Endothelial cell of umbilical vein (primary cell): ENCODE measurements at regions of chr10 and their contacts with region 1.

Region 1: DNA sequence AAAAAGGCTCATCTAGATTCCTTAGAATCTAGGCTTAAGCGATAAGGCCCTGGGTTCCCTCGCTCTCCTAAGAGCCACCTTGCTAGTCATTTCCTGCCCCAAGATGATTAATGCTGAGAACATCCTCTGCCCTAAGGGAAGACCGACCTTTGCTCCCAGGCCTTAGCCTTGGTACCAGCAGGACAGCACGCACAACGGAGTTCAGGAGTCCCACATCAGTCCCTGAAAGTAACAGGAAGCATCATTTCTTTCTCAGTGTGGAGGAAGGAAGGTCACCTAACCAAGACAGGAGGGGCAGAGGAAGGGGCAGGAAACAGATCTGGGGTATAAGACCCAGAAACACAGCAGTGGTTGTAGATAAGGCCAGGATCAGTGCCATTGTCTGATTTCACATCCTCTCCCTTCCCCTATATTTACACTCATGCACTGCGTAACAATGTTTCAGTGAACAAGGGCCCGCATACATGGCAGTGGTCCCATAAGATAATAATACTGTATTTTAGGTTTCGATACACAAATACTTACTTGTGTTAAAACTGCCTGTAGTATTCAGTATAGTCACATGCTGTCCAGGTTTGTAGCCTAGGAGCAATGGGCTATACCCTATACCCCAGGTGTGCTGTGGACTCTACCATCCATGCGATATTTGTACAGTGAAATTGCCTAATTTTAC is 8.1 kb upstream of the FAM107B start:
- DNase-seq: peak; percentile 100
- H3K4me3 ChIP-seq: no peak overlapping the region
- H3K27ac ChIP-seq: peak overlapping the region; percentile 90
- H3K4me1 ChIP-seq: peaks cover 39% of the 10 kb centered on the region
- H3K27me3 ChIP-seq: no peaks in the 10 kb centered on the region
- CTCF ChIP-seq: no peak
- POLR2A ChIP-seq: peak; percentile 92

Region 2: DNA sequence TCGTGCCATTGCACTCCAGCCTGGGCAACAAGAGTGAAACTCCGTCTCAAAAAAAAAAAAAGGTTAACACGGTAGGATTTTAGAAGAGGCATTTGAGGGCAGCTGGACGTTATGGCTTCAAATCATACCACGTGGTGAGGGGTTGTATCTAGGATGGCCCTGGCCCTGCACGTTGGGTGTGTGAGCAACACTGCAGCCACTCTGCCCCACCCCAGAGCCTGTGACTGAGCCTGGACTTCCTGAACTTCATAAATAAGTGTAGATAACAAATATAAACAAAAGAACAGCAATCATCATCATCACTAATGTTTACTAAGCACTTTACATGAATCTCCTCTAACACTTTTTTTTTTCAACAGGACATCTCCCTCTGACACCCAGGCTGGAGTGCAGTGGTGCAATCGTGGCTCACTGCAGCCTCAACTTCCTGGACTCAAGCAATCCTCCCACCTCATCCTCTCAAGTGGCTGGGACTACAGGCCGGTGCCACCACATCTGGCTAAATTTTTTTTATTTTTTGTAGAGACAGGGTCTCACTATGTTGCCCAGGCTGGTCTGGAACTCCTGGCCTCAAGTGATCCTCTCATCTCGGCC is 282.6 kb before region 1 on chr10:
- CTCF ChIA-PET with region 1: no interaction called
- POLR2A ChIA-PET with region 1: no interaction called
- dilution Hi-C with region 1: no loop called
- intact Hi-C with region 1: loop called (anchors 1 kb)
- DNase-seq: no peak
- H3K4me3 ChIP-seq: no peak overlapping the region
- H3K27ac ChIP-seq: no peak overlapping the region
- H3K4me1 ChIP-seq: no peaks in the 10 kb centered on the region
- H3K27me3 ChIP-seq: no peaks in the 10 kb centered on the region
- CTCF ChIP-seq: no peak
- POLR2A ChIP-seq: no peak

Region 3: DNA sequence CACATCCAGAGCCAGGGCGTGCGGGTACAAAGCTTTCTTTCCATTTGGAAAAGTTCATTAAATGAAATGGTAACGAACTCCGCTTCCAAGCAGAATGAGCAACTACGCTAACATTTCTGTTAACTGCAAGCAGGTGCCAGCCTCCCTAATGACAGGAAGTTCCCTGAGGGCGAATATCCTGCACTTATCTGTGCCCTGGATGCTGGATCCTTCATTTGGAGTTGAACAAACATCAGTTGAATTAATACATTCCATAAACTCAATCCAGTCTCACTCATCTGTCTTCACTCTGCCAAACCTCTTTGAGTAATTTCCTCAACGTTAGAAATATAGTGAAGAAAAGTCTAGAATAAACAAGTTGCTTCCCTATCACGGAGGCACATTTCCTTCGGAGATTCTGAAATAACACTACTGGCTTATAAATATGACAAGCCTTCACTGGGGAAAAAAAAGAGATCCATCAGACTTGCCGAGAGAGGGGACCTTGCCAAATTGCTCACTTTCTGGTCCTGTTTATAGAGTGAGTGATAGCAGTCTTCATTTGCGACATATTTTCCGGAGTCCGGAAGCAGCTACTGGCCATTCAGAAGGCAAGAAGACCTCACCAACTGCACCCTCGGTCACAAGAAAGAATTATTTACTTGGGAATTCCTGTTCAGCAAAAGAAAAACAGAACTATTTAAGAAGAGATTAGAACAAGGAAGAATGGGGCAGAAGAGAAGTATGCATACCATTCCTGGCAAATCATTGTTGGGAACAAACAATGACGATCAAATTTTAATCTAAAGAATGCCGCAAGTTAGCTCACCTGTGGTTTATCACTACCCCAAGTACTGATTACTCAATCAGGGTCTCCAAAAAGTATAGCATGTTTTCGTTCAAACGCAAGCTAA is 204.5 kb before region 1 on chr10:
- CTCF ChIA-PET with region 1: no interaction called
- POLR2A ChIA-PET with region 1: no interaction called
- dilution Hi-C with region 1: no loop called
- intact Hi-C with region 1: loop called (anchors 1 kb)
- DNase-seq: peak; percentile 100
- H3K4me3 ChIP-seq: peak overlapping the region in 1 of 3 experiments; percentile 42
- H3K27ac ChIP-seq: peak overlapping the region; percentile 97
- H3K4me1 ChIP-seq: peaks cover 78% of the 10 kb centered on the region
- H3K27me3 ChIP-seq: no peaks in the 10 kb centered on the region
- CTCF ChIP-seq: no peak
- POLR2A ChIP-seq: peak; percentile 82

Region 4: DNA sequence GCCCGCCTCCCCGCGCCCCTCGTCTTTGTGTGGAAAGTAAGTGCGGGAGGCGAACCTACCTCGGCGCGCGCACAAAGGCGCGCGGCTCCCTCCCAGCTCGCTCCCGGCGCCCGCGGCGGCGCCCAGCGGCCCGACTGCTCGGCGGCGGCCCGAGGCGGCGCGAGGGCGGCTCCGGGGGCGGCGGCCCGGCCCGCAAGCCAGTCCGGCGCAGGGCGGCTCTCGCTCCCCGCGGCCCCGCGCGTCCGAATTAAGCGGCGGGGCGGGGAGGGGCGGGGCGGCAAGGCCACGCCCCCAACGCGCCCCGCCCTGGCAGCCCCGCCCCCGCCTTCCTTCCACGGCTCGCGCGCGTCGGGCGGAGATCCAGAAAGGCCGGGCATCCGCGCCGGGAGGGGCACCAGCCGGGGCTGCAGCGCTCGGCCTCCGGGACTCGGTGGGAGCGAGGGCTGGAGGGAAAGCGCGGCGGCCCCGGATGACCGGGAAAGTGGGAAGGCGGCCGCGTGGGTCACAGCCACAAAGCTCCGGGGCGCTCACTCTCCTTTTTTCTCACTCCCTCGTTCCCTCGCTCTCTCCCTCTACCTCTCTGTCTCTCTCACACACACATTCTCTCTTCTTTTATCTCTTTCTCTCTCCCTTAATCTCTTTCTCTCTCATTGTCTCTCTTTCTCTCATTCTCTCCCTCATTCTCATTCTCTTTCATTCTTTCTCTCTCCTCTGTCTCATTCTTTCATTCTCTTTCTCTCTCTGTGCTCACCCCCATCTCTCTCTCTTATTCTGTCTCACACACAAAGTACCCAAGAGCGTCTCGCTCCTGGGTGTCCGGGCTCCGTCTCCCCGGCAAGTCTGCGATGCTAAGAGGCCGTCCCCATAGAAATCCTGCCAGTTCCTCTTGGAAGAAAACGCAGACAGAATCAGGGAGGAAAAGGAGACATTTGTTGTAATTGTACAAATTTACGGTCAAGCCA is 178.4 kb before region 1 on chr10:
- CTCF ChIA-PET with region 1: no interaction called
- POLR2A ChIA-PET with region 1: no interaction called
- dilution Hi-C with region 1: no loop called
- intact Hi-C with region 1: loop called (anchors 1 kb)
- DNase-seq: peak; percentile 71
- H3K4me3 ChIP-seq: peak overlapping the region; percentile 65 to 78 (median 76)
- H3K27ac ChIP-seq: peak overlapping the region; percentile 88
- H3K4me1 ChIP-seq: peaks cover 38% of the 10 kb centered on the region
- H3K27me3 ChIP-seq: no peaks in the 10 kb centered on the region
- CTCF ChIP-seq: no peak
- POLR2A ChIP-seq: peak; percentile 85

Region 5: DNA sequence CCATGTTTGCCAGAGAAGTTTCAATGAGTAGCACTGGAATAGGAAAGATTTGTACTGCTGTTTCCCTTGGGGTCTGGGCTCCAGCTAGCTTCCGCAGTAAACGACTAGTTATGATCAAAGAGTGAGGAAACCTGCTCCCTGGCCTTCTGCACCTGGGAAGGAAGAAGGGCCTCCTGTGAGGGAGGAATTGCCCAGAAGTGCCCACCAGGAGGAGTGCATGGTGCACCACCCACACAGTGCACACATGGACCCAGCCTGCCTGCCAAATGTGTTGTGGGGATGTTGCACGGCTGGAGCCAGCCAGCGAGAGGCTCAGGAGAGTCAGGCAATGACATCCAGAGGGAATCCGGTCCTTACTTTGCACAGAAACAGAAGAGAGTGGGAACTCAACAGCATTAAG is 18.9 kb after region 1 on chr10:
- CTCF ChIA-PET with region 1: interaction called, 5 read pairs
- POLR2A ChIA-PET with region 1: no interaction called
- dilution Hi-C with region 1: no loop called
- intact Hi-C with region 1: loop called (anchors 1 kb)
- DNase-seq: peak; percentile 90
- H3K4me3 ChIP-seq: no peak overlapping the region
- H3K27ac ChIP-seq: no peak overlapping the region
- H3K4me1 ChIP-seq: peaks cover 14% of the 10 kb centered on the region
- H3K27me3 ChIP-seq: no peaks in the 10 kb centered on the region
- CTCF ChIP-seq: peak in 1 of 2 donors; percentile 51
- POLR2A ChIP-seq: no peak

Region 6: DNA sequence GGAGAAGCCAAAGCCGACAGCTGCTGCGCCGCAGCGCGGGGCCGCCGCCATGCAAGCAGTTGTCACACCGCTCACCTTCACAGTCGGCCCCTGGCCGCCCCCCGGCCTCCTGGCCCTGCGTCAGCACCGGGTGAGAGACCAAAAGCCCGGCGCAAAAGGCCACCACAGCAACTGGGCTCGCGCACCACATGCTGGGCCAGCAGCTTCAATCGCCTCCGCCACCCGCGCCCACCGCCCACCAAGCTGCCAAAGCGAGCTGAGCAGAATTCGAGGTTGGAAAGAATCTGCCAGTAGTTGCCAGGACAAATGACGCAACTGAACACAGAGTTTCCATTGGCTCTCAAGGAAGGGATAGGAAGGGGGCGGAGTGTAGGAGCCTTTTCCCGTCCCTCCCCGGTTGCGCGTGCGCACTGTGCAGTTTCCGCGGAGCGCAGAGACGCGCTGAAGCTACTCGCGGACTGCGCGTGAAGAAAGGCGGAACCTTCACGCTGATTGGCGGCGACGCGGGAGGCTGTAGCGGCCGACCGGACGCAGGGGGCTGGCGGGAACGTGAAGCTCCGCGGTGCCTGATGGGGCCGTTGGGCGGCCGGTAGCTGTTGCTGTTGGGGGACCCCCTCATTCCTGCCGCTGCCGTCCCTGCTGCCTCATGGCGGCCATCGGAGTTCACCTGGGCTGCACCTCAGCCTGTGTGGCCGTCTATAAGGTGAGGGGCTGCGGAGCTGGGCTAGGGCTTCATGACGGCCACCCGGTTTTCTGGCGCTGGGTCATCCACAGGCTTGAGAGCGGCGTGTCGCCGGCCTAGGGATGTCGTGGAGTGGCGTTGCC is 55.1 kb after region 1 on chr10 and contains the starts of genes CDNF, HSPA14 and MSANTD7:
- CTCF ChIA-PET with region 1: no interaction called
- POLR2A ChIA-PET with region 1: no interaction called
- dilution Hi-C with region 1: no loop called
- intact Hi-C with region 1: loop called (anchors 1 kb)
- DNase-seq: peak; percentile 100
- H3K4me3 ChIP-seq: peak within 1 kb of the TSS; percentile 47 to 81 (median 71)
- H3K27ac ChIP-seq: peak within 1 kb of the TSS; percentile 74
- H3K4me1 ChIP-seq: peaks cover 11% of the 10 kb centered on the region
- H3K27me3 ChIP-seq: no peaks in the 10 kb centered on the region
- CTCF ChIP-seq: no peak
- POLR2A ChIP-seq: peak; percentile 92
- total RNA-seq, gene CDNF: 0.58 and 0.99 TPM in 2 replicates
- total RNA-seq, gene HSPA14: 15.7 and 18.0 TPM in 2 replicates
- total RNA-seq, gene MSANTD7: 13.1 and 13.6 TPM in 2 replicates